BJ (cell line): ENCODE measurements at regions of chr9 and their contacts with region 1.

Region 1: GRCh38 chr9:133144137-133144903 is 19.4 kb downstream of the GBGT1 start:
- DNase-seq: no peak
- H3K4me3 ChIP-seq: peak overlapping the region; percentile 37
- H3K27me3 ChIP-seq: no peaks in the 10 kb centered on the region
- CTCF ChIP-seq: peak; percentile 81

Region 2: DNA sequence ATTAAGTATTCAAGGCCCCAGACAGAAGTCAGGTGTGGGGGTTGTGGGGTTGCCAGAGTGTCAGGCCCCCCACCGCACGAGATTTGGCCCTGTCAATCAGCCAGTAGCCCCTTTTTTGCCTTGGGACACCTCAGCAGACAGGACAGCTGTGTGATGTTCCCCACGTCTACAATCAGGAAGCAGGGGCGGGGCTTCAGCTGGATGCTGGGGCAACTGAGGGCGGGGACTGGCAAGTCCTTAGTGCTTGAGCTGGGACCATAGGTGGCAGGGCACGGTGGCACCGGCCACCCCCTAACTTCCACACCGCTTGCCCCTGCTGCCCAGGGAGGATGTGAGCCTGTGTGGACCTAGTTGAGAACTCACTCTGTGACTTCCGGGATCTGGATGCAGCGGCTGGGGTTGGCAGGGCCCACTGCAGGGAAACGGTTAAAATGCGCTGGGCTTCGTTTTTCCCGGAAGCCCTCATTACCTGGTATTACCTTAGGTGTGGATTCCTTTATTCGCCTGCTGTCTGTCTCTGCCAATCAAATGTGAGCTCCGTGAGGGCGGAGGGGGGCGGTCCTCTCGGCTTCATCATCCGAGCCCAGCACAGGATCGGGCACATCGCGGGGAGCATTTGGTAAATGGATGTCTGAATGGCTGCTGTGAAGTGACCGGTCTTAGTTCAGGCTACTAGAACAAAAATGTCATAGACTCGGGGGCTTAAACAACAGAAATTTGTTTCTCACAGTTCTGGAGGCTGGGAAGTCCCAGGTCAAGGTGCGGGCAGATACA is 121.0 kb before region 1 on chr9:
- CTCF ChIA-PET with region 1: interaction called, 38 read pairs
- POLR2A ChIA-PET with region 1: no interaction called
- DNase-seq: no peak
- H3K4me3 ChIP-seq: no peak overlapping the region
- H3K27me3 ChIP-seq: no peaks in the 10 kb centered on the region
- CTCF ChIP-seq: no peak

Region 3: DNA sequence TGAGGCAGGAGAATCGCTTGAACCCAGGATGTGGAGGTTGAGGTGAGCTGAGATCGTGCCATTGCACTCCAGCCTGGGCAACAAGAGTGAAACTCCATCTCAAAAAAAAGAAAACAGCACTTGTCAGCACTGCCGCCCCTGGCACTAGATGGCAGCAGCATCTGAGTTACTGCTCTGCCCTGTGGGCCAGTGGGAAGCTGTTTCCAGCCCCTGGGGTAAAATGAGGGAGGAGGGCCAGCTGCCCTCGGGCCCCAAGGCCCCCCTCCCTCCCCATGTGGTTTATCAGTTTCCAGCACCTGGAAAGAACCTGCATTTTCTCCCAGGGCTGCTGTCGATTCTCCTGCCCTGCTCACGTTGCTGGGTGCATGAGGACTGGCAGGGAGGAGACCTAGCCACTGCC is 95.8 kb before region 1 on chr9:
- CTCF ChIA-PET with region 1: interaction called, 92 read pairs
- POLR2A ChIA-PET with region 1: no interaction called
- DNase-seq: no peak
- H3K4me3 ChIP-seq: no peak overlapping the region
- H3K27me3 ChIP-seq: no peaks in the 10 kb centered on the region
- CTCF ChIP-seq: peak; percentile 54

Region 4: GRCh38 chr9:133075925-133076630 is 68.2 kb before region 1 on chr9:
- CTCF ChIA-PET with region 1: interaction called, 14 read pairs
- POLR2A ChIA-PET with region 1: no interaction called
- DNase-seq: peak; percentile 67
- H3K4me3 ChIP-seq: no peak overlapping the region
- H3K27me3 ChIP-seq: 0 out of 2 replicates have a peak, but pooled peaks cover 7% of the 10 kb centered on the region
- CTCF ChIP-seq: no peak

Region 5: DNA sequence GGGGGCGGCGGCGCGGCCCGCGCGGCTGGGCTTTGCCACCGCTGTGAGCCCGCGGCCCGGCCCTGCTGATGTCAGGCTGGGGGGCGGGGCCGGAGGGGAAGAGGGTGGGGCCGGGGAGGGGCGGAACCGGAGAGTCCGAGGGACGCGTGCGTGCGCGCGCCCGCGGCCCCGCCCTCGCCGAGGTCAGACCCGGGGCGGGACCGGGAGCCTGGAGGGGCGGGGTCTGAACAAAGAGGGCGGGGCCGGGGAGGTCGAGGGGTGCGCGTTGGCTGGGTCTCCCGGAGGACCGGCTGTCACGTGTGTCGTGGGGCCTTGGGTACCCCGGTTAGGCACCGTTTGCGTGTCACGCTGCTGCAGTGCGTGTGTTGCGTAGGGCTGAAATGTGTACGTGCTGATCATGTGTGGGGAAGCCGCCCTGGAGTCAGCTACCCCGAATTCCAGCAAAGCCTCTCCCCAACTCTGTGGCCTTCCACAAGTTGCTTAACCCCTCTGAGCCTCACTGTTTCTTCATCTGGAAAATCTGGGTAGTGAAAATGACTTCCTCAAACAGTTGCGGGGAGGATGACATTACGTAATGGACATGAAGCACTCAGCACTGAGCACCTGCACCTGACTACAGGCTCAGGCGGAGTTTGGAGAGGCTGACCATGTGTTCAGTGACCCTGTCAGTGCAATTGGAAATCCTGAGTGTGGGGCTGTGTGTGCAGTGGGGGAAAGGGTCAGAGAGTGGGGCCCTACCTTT is 23.0 kb before region 1 on chr9 and contains the start of gene RALGDS:
- CTCF ChIA-PET with region 1: interaction called, 505 read pairs
- POLR2A ChIA-PET with region 1: no interaction called
- DNase-seq: no peak
- H3K4me3 ChIP-seq: peak within 1 kb of the TSS; percentile 57
- H3K27me3 ChIP-seq: no peaks in the 10 kb centered on the region
- CTCF ChIP-seq: no peak
- polyA plus RNA-seq, gene RALGDS: 18.0 and 25.1 TPM in 2 replicates

Region 6: GRCh38 chr9:133160742-133161546 is 16.6 kb after region 1 on chr9:
- CTCF ChIA-PET with region 1: interaction called, 54 read pairs
- POLR2A ChIA-PET with region 1: no interaction called
- DNase-seq: no peak
- H3K4me3 ChIP-seq: no peak overlapping the region
- H3K27me3 ChIP-seq: no peaks in the 10 kb centered on the region
- CTCF ChIP-seq: peak; percentile 83

Region 7: DNA sequence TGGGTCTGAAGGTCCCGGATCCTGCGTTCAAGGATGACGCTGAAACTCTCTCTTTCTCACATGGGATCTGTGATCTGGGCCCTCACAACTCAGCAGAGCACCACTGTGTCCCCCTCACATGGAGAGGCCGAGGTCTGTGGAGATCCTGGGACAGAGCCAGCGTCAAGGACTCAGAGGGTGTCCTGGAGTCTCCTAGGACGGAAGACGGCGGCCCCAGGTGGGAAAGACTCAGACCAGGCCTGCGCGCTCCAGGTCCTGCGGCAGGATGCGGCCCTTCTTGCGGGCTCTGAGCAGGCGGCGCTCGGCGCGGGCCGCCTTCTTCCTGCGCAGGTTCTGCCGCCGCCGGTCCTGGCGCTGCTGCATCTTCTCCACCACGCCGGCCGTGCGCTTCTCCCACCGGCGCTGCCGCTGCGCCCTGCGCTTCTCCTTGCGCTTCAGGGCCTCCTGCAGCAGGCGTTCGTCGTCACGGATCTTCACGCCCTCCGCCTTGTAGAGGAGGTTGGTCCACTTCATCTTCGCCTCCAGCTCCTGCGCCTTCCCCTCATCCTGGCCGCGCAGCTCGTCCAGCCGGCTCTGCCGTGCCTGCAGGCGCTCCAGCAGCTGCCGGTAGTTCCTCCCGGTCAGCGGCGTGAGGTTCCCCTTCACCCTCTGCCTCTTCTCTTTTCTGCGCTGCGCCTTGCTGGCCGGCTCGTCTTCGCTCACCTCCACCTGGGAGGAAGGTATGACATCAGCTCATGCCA is 187.5 kb after region 1 on chr9:
- CTCF ChIA-PET with region 1: no interaction called
- POLR2A ChIA-PET with region 1: no interaction called
- DNase-seq: no peak
- H3K4me3 ChIP-seq: no peak overlapping the region
- H3K27me3 ChIP-seq: no peaks in the 10 kb centered on the region
- CTCF ChIP-seq: no peak

Region 8: GRCh38 chr9:133619791-133620190 is 475.5 kb after region 1 on chr9:
- CTCF ChIA-PET with region 1: no interaction called
- POLR2A ChIA-PET with region 1: no interaction called
- DNase-seq: no peak
- H3K4me3 ChIP-seq: no peak overlapping the region
- H3K27me3 ChIP-seq: peaks cover 20% of the 10 kb centered on the region
- CTCF ChIP-seq: no peak